Thyroid gland (tissue), 4 donors: ENCODE measurements at regions of chr19 and their contacts with region 1.

Region 1: GRCh38 chr19:13604902-13605586 is 98.8 kb upstream of the CACNA1A start:
- DNase-seq: no peak
- H3K4me3 ChIP-seq: no peak overlapping the region
- H3K27ac ChIP-seq: no peak overlapping the region
- H3K4me1 ChIP-seq: no peaks in the 10 kb centered on the region
- H3K27me3 ChIP-seq: no peaks in the 10 kb centered on the region
- CTCF ChIP-seq: no peak
- POLR2A ChIP-seq: no peak

Region 2: GRCh38 chr19:13652810-13653590 is 48.0 kb after region 1 on chr19:
- intact Hi-C with region 1: no loop called
- DNase-seq: no peak
- H3K4me3 ChIP-seq: no peak overlapping the region
- H3K27ac ChIP-seq: no peak overlapping the region
- H3K4me1 ChIP-seq: no peaks in the 10 kb centered on the region
- H3K27me3 ChIP-seq: no peaks in the 10 kb centered on the region
- CTCF ChIP-seq: no peak
- POLR2A ChIP-seq: no peak

Region 3: GRCh38 chr19:13872695-13873389 is 267.8 kb after region 1 on chr19:
- intact Hi-C with region 1: loop called (anchors 5 kb)
- DNase-seq: peak; percentile 37 to 47
- H3K4me3 ChIP-seq: peak overlapping the region in 2 of 3 donors; percentile 8 to 38
- H3K27ac ChIP-seq: no peak overlapping the region
- H3K4me1 ChIP-seq: peaks cover 0 to 3% of the 10 kb centered on the region in 2 donors
- H3K27me3 ChIP-seq: no peaks in the 10 kb centered on the region
- CTCF ChIP-seq: peak in 2 of 6 experiments; percentile 8 to 26
- POLR2A ChIP-seq: no peak